ENCODE measurements at regions of chr13 and their contacts with region 1.

Region 1: DNA sequence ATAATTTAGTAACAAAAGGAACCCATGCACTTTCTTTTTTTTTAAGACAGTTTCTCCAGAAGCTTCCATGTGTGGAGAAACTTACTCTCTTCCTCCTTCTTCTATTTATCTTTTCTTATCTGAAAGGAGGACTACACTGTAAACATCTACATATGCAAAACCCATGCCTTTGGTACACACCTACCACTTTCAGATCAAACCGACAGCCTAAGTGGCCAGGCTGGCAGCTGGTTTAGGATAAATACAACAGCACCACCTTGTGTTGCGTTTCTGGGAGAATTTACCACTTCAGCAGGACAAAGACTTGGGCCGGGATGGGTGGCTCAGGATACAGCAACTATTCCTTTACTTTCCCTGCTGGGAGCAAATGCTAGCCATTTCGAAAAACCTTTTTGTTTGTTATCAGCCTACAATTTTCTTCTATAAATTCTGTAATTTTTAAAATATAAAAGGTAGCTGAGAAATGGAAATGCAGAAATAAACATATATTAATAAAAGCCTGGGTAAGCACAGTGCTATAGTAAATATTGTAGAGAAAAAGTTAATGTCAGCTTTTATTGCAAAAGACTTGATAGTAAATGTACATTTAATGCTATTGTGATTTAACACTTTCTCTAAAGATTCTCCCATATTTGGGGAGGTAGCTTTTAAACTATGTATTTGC is 94.0 kb upstream of the RFC3 start:
- DNase-seq: peak; percentile 85
- H3K4me3 ChIP-seq: no peak overlapping the region
- H3K27ac ChIP-seq: no peak overlapping the region
- H3K4me1 ChIP-seq: peaks cover 10% of the 10 kb centered on the region
- H3K27me3 ChIP-seq: no peaks in the 10 kb centered on the region
- CTCF ChIP-seq: peak; percentile 62 to 70
- POLR2A ChIP-seq: no peak

Region 2: DNA sequence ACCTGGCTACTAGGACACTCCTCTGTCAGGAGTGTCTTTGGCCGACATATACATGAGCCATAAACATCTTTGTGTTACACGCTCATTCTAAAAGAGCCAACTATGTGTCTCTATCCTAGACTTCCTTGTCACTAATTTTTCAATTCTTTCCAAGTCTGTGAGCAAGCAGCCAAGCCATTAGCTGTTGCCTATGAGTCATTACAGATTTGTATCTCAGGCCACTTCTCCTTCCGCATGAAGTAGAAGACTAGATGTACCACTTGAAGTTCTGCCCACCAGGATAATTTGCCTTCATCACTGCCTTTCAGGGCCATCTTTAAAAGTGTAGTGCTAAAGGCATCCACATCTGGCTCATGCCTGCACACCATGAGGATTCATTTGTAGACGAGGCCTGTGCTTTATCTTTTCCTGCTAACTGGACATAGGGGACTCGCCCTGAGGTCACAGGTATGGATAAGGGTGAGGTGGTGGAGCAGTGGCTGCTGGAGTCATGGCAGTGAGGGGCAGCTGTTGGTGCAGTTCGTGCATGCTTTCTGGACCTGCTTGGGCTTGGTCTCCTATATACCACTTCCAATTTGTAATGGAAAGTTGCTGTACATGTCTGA is 833.8 kb before region 1 on chr13:
- CTCF ChIA-PET with region 1: no interaction called
- POLR2A ChIA-PET with region 1: no interaction called
- dilution Hi-C with region 1: no loop called
- intact Hi-C with region 1: no loop called
- DNase-seq: no peak
- H3K4me3 ChIP-seq: no peak overlapping the region
- H3K27ac ChIP-seq: no peak overlapping the region
- H3K4me1 ChIP-seq: no peaks in the 10 kb centered on the region
- H3K27me3 ChIP-seq: peaks cover under 1 to 2% of the 10 kb centered on the region in 2 experiments
- CTCF ChIP-seq: no peak
- POLR2A ChIP-seq: no peak

Region 3: DNA sequence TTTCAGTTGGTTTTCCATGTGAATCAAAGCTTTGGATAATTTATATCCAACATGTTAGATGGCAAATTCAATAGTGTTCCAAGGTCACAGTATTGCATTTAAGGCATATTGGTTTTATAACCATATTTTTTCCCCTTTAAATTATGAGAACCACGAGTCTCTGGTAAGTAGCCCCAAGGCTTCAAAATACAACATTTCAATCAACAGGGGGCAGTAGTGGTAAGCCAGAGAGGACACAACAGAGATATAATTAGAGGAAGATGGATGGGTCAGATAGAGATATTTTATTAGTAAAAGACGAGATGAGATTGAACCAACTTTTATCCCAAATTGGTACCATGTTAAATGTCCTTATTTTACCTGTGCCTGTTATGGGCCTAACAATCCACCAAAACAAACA is 654.5 kb before region 1 on chr13:
- CTCF ChIA-PET with region 1: no interaction called
- POLR2A ChIA-PET with region 1: no interaction called
- dilution Hi-C with region 1: no loop called
- intact Hi-C with region 1: loop called (anchors 2 kb)
- DNase-seq: peak; percentile 25
- H3K4me3 ChIP-seq: no peak overlapping the region
- H3K27ac ChIP-seq: no peak overlapping the region
- H3K4me1 ChIP-seq: no peaks in the 10 kb centered on the region
- H3K27me3 ChIP-seq: no peaks in the 10 kb centered on the region
- CTCF ChIP-seq: peak; percentile 2 to 10
- POLR2A ChIP-seq: no peak

Region 4: DNA sequence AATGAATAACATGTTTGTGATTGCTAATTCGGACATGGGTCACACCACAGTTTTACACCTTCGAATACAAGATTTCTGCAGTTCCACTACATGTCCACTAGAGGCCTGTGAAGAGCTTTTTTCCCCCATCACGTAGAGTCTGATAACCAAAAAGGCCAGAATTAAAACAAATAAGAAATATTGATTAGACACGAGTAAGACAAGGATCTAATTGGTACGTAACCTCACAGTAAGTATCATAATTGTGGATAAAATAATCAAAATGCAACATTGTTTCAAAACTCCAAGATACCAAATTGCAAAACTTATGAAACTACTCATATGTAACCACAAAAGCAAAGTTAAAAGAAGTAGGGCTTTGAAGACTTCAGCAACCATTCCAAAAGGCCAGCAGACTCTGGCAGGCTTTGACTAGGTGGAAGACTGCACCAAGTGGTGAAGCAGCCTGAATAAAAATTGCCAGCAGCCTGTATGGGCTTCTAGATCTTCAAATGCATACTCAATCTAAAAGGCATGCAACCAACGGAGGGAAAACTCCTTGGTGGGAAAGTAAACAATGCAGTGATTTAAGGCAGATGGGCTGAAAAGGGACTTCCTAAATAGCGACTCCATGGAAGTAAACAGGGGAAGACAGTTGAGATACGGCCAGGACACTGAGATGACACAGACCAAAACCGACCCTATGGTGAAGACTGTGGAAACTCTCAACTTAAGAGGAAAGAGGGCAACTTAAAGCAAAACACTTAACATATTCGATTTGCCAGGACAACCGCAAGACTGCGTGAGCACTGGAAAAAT is 495.1 kb before region 1 on chr13:
- CTCF ChIA-PET with region 1: interaction called, 3 read pairs
- POLR2A ChIA-PET with region 1: no interaction called
- dilution Hi-C with region 1: no loop called
- intact Hi-C with region 1: loop called (anchors 1 kb)
- DNase-seq: peak; percentile 71
- H3K4me3 ChIP-seq: no peak overlapping the region
- H3K27ac ChIP-seq: peak overlapping the region; percentile 46
- H3K4me1 ChIP-seq: peaks cover 31% of the 10 kb centered on the region
- H3K27me3 ChIP-seq: no peaks in the 10 kb centered on the region
- CTCF ChIP-seq: peak; percentile 65 to 70
- POLR2A ChIP-seq: no peak

Region 5: DNA sequence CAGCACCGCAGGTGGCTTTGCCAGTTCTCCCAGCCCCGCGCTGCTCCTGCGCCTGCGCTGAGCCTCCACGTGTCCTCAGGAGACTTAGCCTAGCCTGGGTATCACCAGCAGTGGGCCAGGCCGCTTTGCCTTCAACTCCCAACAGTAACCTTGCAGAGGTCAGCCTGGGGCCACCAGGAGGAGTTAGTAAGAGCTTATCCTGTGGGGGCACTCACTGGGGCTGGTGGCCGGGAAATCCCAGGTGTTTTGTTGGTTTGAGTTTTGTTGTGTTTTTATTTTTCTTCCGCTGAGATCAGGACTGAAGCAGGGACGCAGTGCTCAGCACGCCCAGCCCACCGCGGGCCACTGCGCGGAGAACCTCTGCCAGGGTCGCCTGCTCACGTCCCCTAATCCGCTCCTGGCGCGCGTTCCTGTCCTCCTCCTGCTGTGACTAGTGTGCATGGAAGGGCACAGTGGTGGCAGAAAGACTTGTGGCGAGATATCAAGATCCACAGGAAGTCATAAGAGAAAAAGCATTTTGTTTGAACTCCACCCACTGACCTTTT is 113.4 kb before region 1 on chr13:
- CTCF ChIA-PET with region 1: no interaction called
- POLR2A ChIA-PET with region 1: no interaction called
- dilution Hi-C with region 1: no loop called
- intact Hi-C with region 1: loop called (anchors 2 kb)
- DNase-seq: no peak
- H3K4me3 ChIP-seq: peak overlapping the region in 2 of 3 experiments; percentile 7 to 39
- H3K27ac ChIP-seq: peak overlapping the region; percentile 25
- H3K4me1 ChIP-seq: peaks cover 14% of the 10 kb centered on the region
- H3K27me3 ChIP-seq: peaks cover 0 to 3% of the 10 kb centered on the region in 2 experiments
- CTCF ChIP-seq: no peak
- POLR2A ChIP-seq: no peak

Region 6: GRCh38 chr13:35164324-35164932 is 1440.5 kb after region 1 on chr13:
- CTCF ChIA-PET with region 1: interaction called, 6 read pairs
- POLR2A ChIA-PET with region 1: no interaction called
- dilution Hi-C with region 1: no loop called
- intact Hi-C with region 1: loop called (anchors 5 kb)
- DNase-seq: peak; percentile 59
- H3K4me3 ChIP-seq: no peak overlapping the region
- H3K27ac ChIP-seq: no peak overlapping the region
- H3K4me1 ChIP-seq: no peaks in the 10 kb centered on the region
- H3K27me3 ChIP-seq: no peaks in the 10 kb centered on the region
- CTCF ChIP-seq: peak; percentile 25 to 26
- POLR2A ChIP-seq: no peak